CD4-positive, alpha-beta T cell (primary cell): ENCODE measurements at regions of chr3 and their contacts with region 1.

Region 1: DNA sequence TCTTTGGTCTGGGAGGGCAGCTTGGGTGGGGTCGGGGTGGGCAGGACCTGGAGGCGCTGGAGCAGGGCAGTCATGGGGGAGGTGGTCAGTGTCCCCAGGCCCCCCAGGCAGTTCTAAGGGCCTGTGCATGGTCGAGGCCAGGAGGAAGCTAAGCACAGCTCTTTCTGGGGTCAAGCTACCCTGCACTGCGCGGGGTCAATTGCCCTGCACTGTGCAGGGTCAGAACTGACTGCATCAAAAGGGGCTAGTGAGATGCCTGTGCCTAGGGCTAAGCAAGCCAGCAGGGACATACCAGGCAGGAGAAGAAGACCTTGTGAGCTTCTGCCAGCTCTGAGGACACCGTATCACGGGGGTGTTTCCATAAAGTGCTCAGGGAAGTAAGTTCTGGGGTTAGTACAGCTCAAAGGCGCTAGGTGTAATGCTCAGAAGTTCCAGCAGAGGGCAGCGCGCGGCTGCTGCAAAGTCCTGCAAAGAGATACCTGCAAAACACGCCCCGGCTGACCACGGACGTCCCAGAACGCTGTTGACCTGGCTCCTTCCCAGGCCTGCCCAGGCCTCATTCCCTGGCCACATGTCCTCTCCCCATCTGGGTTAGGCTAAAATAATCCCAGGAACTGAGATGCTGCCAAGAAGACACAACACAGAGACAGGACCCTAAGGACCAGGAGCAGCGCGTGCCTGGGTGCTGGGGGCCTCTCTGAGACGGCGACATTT is 18.8 kb upstream of the IQSEC1 start:
- DNase-seq: peak; percentile 63 to 88 (median 78)
- ATAC-seq: peak; percentile 93
- H3K4me3 ChIP-seq: no peak overlapping the region
- H3K4me3 Mint-ChIP-seq: no peak overlapping the region
- H3K27ac ChIP-seq: no peak overlapping the region
- H3K27ac Mint-ChIP-seq: no peak overlapping the region
- H3K4me1 ChIP-seq: peaks cover 8% of the 10 kb centered on the region
- H3K4me1 Mint-ChIP-seq: peaks cover 6% of the 10 kb centered on the region
- H3K27me3 ChIP-seq: peaks cover 0 to 3% of the 10 kb centered on the region in 2 experiments
- H3K27me3 Mint-ChIP-seq: peaks cover 18% of the 10 kb centered on the region
- CTCF ChIP-seq: peak; percentile 94

Region 2: GRCh38 chr3:12999147-13000140 is 92.6 kb before region 1 on chr3:
- CTCF ChIA-PET with region 1: no interaction called
- POLR2A ChIA-PET with region 1: no interaction called
- intact Hi-C with region 1: no loop called
- DNase-seq: peak in 4 of 14 experiments; percentile 3 to 77 (median 61)
- ATAC-seq: no peak
- H3K4me3 ChIP-seq: no peak overlapping the region
- H3K4me3 Mint-ChIP-seq: no peak overlapping the region
- H3K27ac ChIP-seq: peak overlapping the region in 1 of 2 donors; percentile 10
- H3K27ac Mint-ChIP-seq: peak overlapping the region; percentile 35
- H3K4me1 ChIP-seq: peaks cover 60% of the 10 kb centered on the region
- H3K4me1 Mint-ChIP-seq: peaks cover 89% of the 10 kb centered on the region
- H3K27me3 ChIP-seq: no peaks in the 10 kb centered on the region
- H3K27me3 Mint-ChIP-seq: no peaks in the 10 kb centered on the region
- CTCF ChIP-seq: no peak

Region 3: DNA sequence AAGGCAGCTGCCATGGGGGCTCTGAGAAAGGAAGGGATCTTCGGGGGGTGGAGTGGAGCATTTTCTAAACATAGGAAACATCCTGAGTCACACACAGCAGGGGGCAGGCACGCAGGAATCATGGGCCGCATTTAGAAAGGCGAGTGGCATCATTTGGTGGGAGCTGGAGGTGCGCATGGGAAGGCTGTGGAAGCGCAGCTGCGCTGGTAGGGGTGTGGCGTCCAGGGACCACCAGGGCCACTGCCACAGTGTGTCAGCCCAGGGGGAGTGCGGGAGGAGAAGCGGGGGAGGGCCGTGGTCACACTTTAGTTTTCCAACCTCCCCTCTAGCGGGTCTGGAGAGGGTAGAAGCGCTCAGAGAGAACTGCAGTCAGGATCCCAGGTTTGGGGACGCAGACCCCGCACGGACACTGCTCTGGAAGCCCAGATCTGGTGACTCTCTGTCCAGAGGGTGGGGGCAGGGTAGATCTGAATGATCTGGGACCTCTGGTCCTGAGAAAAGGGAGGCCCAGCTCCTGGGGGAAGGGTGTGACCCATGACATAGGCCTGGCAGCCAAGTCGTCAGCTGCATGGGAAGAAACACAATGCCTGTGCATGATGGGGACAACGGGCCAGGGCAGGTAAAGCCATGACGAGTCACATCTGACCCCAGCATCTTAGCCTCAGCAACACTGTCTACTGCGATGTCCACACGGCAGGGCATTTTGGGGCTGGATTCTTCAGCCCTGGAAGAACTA is 69.1 kb after region 1 on chr3:
- CTCF ChIA-PET with region 1: no interaction called
- POLR2A ChIA-PET with region 1: no interaction called
- intact Hi-C with region 1: no loop called
- DNase-seq: no peak
- ATAC-seq: no peak
- H3K4me3 ChIP-seq: no peak overlapping the region
- H3K4me3 Mint-ChIP-seq: no peak overlapping the region
- H3K27ac ChIP-seq: no peak overlapping the region
- H3K27ac Mint-ChIP-seq: no peak overlapping the region
- H3K4me1 ChIP-seq: no peaks in the 10 kb centered on the region
- H3K4me1 Mint-ChIP-seq: no peaks in the 10 kb centered on the region
- H3K27me3 ChIP-seq: no peaks in the 10 kb centered on the region
- H3K27me3 Mint-ChIP-seq: no peaks in the 10 kb centered on the region
- CTCF ChIP-seq: no peak

Region 4: DNA sequence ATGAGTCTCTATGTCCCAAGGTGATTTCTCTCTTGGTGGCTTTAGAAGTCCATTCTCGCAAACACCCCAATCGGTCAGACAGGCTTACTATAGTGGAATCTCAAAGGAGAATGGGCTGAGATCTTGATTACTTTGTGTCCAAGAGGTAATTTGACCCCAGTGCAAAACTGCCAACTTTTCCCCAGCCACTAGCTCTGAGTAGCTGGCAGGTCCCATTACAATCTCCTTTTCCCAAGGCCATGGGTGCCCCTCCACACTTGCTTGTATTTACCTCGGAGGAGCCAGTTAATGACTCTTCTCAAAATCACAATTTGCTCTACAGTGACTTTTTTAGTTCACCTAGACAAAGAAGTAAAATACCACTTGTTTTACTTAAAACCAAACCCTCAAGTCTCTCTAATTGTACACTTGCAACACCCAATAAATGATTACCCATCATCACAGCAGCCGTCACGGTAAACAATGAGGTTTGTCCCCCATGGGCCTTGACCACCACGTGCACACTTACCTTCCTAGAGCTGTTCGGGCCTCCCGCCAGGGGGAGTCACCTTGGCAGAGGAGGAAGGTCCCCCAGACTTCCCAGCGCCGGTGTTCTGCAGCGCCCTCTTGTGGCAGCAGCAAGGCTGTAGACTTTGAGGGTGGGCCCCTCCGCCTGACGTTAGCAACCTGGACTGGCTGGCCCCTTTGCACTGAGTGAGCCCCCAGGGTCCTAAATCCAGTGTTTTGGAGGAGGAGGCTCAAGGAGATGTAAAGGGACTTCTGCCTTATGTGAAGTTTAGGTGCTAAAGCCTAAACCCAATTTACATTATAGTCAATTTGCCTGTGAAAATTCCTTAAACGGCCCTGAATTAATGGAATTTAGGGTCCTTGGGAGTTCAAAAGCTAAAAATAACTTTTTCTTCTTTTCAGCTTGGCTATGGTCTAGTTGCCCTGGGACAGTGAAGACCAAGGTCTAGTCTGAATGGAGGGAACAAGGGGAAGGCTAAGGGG is 369.4 kb after region 1 on chr3:
- CTCF ChIA-PET with region 1: interaction called, 13 read pairs
- POLR2A ChIA-PET with region 1: no interaction called
- intact Hi-C with region 1: loop called (anchors 1 kb)
- DNase-seq: peak; percentile 57 to 89 (median 69)
- ATAC-seq: peak; percentile 97
- H3K4me3 ChIP-seq: no peak overlapping the region
- H3K4me3 Mint-ChIP-seq: no peak overlapping the region
- H3K27ac ChIP-seq: no peak overlapping the region
- H3K27ac Mint-ChIP-seq: no peak overlapping the region
- H3K4me1 ChIP-seq: no peaks in the 10 kb centered on the region
- H3K4me1 Mint-ChIP-seq: no peaks in the 10 kb centered on the region
- H3K27me3 ChIP-seq: peaks cover 0 to 2% of the 10 kb centered on the region in 2 experiments
- H3K27me3 Mint-ChIP-seq: peaks cover 8% of the 10 kb centered on the region
- CTCF ChIP-seq: peak; percentile 76

Region 5: DNA sequence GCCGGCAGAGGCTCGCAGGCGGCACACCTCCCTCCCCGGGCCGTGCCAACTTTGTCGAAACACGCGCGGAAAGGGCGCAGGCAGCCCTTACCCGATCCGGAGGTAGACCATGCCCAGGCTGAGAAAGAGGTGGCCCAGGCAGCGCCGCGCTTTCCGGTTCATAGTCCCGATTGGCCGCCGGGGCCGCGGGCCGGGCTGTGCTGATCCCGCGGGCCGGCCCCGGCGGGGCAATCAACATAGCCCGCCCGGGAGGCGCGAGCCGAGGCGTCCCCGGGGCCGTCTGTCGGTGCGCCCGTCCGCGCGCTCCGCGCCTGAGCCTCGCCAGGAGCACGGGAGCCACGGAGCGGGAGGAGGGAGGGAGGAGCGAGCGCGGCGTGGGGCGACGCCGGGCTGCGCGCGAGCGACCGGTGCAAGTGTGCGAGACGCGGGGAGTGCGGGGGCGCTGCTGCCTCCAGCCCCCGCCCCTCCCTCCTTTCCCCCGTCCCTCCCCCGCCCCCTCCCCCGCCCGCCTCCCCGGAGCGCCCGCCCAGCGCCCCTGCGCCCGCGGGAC is 787.7 kb after region 1 on chr3 and contains the start of gene WNT7A:
- CTCF ChIA-PET with region 1: no interaction called
- POLR2A ChIA-PET with region 1: no interaction called
- intact Hi-C with region 1: loop called in 1 of 2 experiments (anchors 10 kb)
- DNase-seq: peak in 8 of 14 experiments; percentile 34 to 88 (median 56)
- ATAC-seq: peak; percentile 63
- H3K4me3 ChIP-seq: peak within 1 kb of the TSS; percentile 92
- H3K4me3 Mint-ChIP-seq: peak within 1 kb of the TSS; percentile 93
- H3K27ac ChIP-seq: peak within 1 kb of the TSS; percentile 17 to 33
- H3K27ac Mint-ChIP-seq: peak within 1 kb of the TSS; percentile 25
- H3K4me1 ChIP-seq: peaks cover 36% of the 10 kb centered on the region
- H3K4me1 Mint-ChIP-seq: peaks cover 26% of the 10 kb centered on the region
- H3K27me3 ChIP-seq: peaks cover 4 to 20% of the 10 kb centered on the region in 2 experiments
- H3K27me3 Mint-ChIP-seq: peaks cover 10% of the 10 kb centered on the region
- CTCF ChIP-seq: no peak
- total RNA-seq, gene WNT7A: 22.4 to 24.7 TPM